ENCODE measurements at regions of chr1 and their contacts with region 1.

Region 1: DNA sequence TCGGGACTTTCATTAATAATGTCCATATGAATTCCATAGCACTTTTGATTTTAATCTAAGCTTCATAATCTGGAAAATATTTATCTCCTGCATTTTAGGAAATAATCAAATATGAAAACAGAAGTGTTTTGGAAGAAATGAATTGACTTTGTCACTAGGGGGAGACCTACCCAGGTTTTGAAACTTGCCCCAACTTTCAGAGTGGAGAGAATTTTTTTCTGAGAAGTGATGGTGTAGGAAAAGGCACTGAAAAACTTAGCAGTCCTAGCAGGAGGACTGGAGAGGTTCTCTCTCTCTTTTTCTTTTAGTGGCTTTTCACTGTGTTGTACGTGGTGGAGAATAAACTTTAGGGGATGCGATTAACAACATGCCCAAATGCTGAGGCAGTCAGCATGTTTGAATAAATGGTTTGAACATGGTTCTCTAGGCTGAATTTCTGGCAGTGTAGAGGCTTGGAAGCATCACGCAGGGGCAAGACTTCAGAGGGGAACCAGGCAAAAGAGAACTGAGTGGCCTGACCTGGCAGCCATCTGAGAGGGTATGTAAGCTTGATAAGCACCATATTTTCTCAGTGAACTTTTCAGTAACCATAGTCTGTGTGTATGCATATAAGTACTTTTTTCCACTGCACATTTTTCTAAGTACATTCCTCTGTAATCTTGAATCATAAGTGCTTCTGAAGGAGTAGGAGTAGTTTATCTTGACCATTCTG is 68.3 kb upstream of the NEK7 start:
- DNase-seq: peak; percentile 30
- ATAC-seq: peak; percentile 61
- H3K4me3 Mint-ChIP-seq: no peak overlapping the region
- H3K27ac Mint-ChIP-seq: peak overlapping the region; percentile 39
- H3K4me1 Mint-ChIP-seq: peaks cover 8% of the 10 kb centered on the region
- H3K27me3 Mint-ChIP-seq: no peaks in the 10 kb centered on the region

Region 2: GRCh38 chr1:198102454-198102827 is 13.9 kb after region 1 on chr1:
- CTCF ChIA-PET with region 1: interaction called, 43 read pairs
- POLR2A ChIA-PET with region 1: no interaction called
- DNase-seq: peak; percentile 51
- ATAC-seq: peak; percentile 86
- H3K4me3 Mint-ChIP-seq: peak overlapping the region; percentile 39
- H3K27ac Mint-ChIP-seq: peak overlapping the region; percentile 82
- H3K4me1 Mint-ChIP-seq: peaks cover 26% of the 10 kb centered on the region
- H3K27me3 Mint-ChIP-seq: no peaks in the 10 kb centered on the region

Measured in activated CD8-positive, alpha-beta T cell treated with anti-CD3 and anti-CD28 coated beads, Interleukin-2, amount 10 ng/mL, durations not matched to agents 7 days and 5 days (primary cell).